ENCODE measurements at regions of chr19 and their contacts with region 1.

Region 1: GRCh38 chr19:43433358-43433673 is 18.6 kb downstream of the TEX101 start:
- DNase-seq: no peak
- CTCF ChIP-seq: no peak

Region 2: DNA sequence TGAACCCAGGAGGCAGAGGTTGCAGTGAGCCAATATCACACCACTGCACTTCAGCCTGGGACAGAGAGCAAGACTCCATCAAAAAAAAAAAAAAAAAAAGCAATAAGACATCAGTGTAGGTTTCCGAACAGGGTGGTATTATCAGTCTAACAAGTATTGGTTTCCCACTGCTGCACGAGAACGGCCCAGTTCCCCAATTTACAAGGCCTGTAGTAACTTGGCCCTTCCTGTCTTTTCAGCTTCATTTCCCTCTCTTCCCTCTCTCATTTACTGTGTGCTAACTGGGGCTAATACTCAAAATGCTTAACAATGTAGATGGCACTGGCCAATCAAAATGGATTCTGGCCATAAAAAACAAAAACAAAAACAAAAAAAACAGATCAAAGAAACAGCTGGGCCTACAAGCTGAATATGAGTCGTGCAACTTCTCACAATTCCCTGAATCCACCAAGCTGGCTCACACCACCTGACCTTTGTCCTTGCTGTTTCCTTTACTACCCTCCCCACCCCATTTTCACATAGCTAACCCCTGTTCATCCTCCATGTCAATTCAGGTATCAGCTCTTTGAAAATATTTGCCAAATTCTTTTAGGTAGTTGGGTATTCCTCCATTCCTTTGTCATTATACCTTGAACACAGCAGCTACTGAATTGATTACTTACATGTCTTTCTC is 16.2 kb before region 1 on chr19:
- CTCF ChIA-PET with region 1: interaction called, 26 read pairs
- POLR2A ChIA-PET with region 1: no interaction called
- DNase-seq: no peak
- CTCF ChIP-seq: no peak

Measured in GM10248 (cell line).